ENCODE measurements at regions of chr2 and their contacts with region 1.

Region 1: DNA sequence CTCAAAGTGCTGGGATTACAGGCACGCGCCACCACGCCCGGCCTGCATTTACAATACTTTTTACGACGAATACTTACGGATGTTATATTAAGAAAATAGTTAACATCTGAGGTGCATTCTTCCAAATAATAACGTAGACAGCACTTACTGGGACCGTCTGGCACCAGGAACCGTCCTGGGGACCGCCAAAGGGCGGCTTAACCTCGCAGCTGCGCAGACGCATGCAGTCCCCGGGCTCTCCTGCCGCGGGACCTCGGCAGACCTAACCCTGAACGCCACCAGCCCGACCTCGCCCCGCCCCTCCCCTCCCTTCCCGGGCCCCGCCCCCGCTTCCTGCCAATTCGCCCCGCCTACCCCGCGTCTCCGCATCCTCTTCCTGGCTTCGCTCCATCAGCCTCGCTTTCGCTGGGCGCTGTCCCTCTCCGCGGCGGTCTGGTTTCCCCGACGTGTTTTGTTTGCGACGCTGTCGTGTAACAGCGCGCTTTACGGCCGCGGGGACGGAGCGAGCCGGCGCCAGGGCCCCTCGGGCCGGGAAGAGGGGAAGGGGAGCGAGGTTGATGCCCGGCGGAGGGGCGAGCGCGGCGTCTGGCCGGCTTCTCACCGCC is at the start of gene CNOT11:
- DNase-seq: peak; percentile 93 to 97 (median 96)
- H3K4me3 ChIP-seq: peak within 1 kb of the TSS; percentile 79 to 100 (median 99)
- H3K27ac ChIP-seq: peak within 1 kb of the TSS; percentile 57 to 97 (median 91)
- H3K27me3 ChIP-seq: no peaks in the 10 kb centered on the region
- CTCF ChIP-seq: peak in 25 of 56 donors; percentile 6 to 45 (median 25)
- total RNA-seq, gene CNOT11: 17.6 to 47.8 (median 29.3) TPM

Region 2: DNA sequence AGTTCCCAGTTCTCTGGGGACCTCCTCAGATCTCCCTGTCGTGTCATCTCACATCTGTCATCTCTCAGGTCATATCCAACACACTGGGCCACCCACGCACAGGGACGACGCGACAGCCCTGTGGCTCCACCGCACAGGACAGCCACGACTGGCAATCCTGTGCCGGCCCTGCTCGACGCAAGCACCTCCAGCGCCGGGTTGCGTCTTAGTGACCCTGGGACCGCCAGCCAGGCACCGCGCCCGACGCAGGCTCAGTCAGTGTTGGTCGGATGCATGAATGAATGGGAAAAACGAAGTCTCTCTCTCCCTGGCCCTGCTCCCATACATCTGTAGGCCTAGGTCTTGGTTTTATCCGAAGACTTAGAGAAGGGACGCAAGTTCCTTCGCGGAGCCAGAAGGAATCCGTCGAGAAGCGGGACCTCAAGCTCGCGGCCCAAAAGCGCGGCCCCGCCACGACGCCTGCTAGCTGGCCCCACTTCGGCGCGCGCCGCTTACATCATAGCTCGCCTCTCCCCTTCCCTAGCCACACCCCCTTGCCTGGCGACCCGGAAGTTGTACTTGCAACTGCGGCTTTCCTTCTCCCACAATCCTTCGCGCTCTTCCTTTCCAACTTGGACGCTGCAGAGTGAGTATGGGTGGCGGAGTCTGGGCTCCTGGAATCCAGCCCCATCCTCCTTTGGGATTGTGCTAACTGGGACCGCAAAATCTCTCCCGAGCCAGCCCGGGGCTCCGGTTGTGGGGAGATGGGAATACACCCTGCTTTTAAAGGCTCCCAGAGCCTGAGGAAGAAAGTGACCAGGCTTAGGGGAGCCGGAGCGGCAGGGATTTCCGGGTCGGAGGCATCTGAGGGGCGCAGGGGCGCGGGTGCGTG is 250.6 kb before region 1 on chr2 and contains the start of gene RPL31:
- intact Hi-C with region 1: loop called in 1 of 2 experiments (anchors 5 kb)
- DNase-seq: peak; percentile 93 to 98 (median 96)
- H3K4me3 ChIP-seq: peak within 1 kb of the TSS; percentile 54 to 98 (median 83)
- H3K27ac ChIP-seq: peak within 1 kb of the TSS; percentile 54 to 96 (median 87)
- H3K27me3 ChIP-seq: no peaks in the 10 kb centered on the region
- CTCF ChIP-seq: peak in 31 of 56 donors; percentile 6 to 54 (median 30)
- total RNA-seq, gene RPL31: 408 to 917 (median 635) TPM

Region 3: DNA sequence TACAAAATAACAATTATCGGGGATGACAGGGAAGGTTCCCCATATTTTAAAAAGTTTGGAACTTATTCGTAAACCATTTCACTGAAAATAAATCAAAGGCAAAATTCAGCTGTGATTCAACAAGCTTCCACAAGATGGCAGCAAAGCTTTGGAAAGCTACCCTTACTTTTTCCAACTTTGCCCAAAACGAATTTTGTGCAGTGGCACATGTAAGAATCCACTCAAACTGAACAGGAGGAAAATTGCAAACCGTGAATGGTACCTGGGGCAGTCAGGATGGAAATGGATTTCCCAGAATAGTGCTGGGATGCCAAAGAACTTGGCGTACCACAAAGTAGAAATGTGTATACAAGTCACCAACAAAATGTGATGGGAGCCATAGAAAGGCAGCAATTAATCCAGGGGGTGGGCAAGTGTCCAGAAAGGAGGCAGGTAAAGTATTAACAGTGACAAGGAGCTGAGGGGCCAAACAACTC is 239.8 kb before region 1 on chr2:
- intact Hi-C with region 1: loop called in 1 of 2 experiments (anchors 5 kb)
- DNase-seq: peak in 2 of 10 donors; percentile 23 to 32
- H3K4me3 ChIP-seq: no peak overlapping the region
- H3K27ac ChIP-seq: no peak overlapping the region
- H3K27me3 ChIP-seq: no peaks in the 10 kb centered on the region
- CTCF ChIP-seq: peak; percentile 76 to 98 (median 89)

Region 4: DNA sequence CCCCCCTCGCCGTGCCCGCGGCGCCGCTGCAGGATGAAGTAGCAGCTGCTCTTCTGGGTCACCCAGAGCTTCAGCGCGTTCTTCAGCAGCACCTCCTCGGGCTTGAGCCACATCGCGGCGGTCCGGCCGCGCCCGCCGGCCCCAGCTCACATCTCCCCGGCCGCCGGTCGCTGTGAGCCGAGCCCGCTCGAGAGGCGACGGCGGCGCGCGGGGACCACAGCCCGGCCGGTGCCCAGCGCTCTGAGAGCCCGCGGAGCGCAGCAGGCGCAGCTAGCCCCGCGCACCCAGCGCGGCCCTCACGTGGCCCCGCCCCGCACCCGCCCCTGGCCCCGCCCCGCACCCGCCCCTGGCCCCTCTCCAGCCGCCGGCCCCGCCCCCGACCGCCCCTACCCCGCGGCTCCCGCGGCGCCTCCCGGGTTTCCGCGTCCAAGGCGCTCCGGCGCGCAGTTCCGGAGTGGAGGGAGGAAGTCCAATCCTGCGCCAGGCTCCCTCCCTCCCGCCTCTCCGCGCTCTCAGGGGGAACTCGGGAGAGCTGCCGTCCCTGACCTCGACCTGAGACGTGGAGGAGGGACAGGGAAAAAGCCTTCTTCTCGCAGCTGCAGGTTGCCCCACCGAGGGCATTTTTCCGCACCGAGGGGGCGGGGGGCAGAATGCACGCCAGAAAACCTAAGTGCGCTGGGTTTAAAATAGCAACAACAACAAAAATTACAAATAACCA is 101.2 kb before region 1 on chr2 and contains the start of gene TBC1D8:
- intact Hi-C with region 1: loop called in 1 of 2 experiments (anchors 5 kb)
- DNase-seq: peak; percentile 55 to 86 (median 74)
- H3K4me3 ChIP-seq: peak within 1 kb of the TSS; percentile 51 to 85 (median 72)
- H3K27ac ChIP-seq: peak within 1 kb of the TSS in 56 of 59 donors; percentile 13 to 90 (median 75)
- H3K27me3 ChIP-seq: no peaks in the 10 kb centered on the region
- CTCF ChIP-seq: peak in 9 of 56 donors; percentile 0 to 24 (median 14)
- total RNA-seq, gene TBC1D8: 10.5 to 33.3 (median 21.0) TPM

Region 5: GRCh38 chr2:101277113-101277512 is 24.6 kb after region 1 on chr2:
- intact Hi-C with region 1: no loop called
- DNase-seq: peak in 2 of 10 donors; percentile 32 to 49
- H3K4me3 ChIP-seq: no peak overlapping the region
- H3K27ac ChIP-seq: peak overlapping the region in 2 of 59 donors; percentile 13 to 52
- H3K27me3 ChIP-seq: no peaks in the 10 kb centered on the region
- CTCF ChIP-seq: peak in 51 of 56 donors; percentile 21 to 68 (median 45)

Region 6: DNA sequence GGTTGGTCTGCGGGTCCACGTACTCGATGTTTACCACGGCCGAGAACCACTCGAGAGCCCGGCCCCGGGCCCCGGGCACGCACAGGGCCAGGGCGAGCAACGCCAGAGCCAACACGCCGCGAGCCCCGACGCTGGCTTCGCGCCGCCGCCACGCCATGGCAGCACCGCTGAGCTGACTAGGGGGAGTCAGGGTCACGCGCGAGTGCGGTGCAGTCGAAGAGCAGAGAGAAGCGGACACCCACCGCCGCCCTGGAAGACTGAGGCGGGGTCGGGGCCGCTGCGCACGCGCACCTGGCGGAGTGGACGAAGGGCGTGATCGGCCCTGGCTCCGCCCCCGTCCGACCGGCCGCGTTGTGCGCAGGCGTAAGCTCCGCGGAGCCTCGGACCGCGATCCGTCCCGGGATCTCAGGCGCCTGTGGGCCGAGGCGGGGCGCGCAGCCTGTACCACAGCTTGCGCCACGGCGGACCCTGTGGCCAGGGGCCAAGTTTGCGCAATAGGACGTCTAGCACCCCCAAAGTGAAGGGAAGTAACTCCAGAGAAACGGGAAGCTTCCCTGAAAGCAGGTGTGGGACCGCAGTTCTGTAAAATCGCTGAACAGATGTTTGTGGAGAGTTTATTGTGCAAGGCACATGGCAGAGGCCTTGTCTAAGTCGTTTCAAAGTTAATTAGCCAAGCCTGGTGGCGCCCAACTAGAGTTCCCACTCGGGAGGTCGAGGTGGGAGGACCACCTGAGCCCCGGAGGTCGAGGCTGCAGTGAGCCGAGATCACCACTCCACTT is 56.1 kb after region 1 on chr2 and contains the start of gene RNF149:
- intact Hi-C with region 1: loop called (anchors 2 to 5 kb)
- DNase-seq: peak; percentile 76 to 95 (median 89)
- H3K4me3 ChIP-seq: peak within 1 kb of the TSS; percentile 70 to 100 (median 92)
- H3K27ac ChIP-seq: peak within 1 kb of the TSS; percentile 67 to 97 (median 91)
- H3K27me3 ChIP-seq: no peaks in the 10 kb centered on the region
- CTCF ChIP-seq: peak in 33 of 56 donors; percentile 10 to 64 (median 26)
- total RNA-seq, gene RNF149: 30.6 to 66.5 (median 47.5) TPM

Region 7: DNA sequence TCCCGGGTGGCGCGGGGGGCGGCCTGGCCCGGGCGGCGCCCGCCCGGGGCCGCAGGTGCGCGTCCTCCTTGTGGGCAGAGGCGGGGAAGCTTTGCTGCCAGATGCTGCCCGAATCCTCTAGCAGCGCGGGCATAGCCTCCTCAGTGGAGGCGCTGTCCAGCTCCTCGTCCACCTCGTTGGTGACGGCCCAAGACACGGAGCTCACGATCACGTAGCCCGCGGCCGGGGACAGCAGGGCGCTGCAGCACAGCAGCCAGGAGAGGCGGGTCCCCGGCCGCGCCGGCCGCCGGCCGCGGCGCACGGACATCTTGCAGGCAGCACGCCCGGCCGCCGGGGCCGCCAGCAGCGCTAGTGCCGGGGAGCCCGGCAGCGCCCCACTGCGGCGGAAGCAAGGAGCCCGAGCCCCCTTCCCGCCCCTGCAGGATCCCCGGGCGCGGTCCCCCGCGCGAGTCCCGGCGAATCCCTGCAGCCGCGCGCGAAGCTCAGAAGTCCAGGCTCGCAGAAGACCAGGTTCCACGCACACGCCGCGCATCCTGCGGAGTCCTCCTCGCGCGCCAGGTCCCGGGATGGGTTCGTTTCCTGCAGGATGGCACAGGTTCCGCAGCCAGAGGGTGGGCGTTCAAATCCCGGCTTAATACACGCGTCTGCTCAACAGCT is 134.8 kb after region 1 on chr2 and contains the start of gene CREG2:
- intact Hi-C with region 1: loop called in 1 of 2 experiments (anchors 2 kb)
- DNase-seq: peak; percentile 11 to 90 (median 76)
- H3K4me3 ChIP-seq: peak within 1 kb of the TSS; percentile 52 to 84 (median 71)
- H3K27ac ChIP-seq: peak within 1 kb of the TSS in 53 of 59 donors; percentile 4 to 89 (median 74)
- H3K27me3 ChIP-seq: peaks cover 0 to 6% (median 0%) of the 10 kb centered on the region in 45 donors
- CTCF ChIP-seq: peak in 54 of 56 donors; percentile 31 to 91 (median 68)
- total RNA-seq, gene CREG2: 31.8 to 189 (median 122) TPM

Measured in dorsolateral prefrontal cortex (tissue), 120 donors.